GM10248 (cell line): ENCODE measurements at regions of chr15 and their contacts with region 1.

Region 1: GRCh38 chr15:76139368-76140073 is 79.7 kb downstream of the TMEM266 start:
- DNase-seq: peak; percentile 86
- CTCF ChIP-seq: peak; percentile 91

Region 2: DNA sequence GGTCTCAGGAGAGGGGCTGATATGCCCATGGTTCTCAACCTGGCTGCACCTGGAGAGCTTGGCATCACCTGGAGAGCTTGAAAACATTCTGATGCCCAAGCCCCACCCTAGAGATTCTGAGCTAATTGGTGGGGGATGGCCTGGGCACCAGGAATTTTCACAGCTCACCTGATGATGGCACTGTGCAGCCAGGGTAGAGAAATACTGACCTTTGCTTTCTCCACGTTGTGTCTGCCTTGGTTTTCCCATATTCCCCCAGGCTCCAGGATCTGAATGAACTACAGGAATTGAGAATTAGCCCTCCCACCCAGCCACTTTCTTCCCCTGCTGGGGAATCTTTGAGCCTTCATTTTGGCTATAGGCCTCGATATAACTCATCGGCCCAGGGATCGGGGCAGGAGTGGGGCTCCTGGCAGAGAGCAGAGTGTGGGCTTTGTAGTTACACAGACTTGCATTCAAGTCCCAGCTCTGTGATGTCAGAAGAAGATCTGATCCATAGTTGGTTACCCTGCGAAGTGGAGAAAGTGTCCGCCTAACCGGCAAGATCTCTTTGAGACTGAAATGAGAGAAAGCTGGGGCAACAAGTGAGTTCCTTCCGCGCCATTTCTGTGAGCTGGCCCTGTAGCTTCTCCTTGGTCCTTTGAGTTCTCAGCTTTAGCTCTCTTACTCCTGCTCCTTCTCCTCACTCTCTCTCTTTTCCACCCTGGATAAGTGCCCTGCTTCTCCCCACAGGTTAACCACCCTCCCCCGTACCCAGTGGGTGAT is 329.4 kb before region 1 on chr15:
- CTCF ChIA-PET with region 1: interaction called, 49 read pairs
- POLR2A ChIA-PET with region 1: no interaction called
- DNase-seq: peak; percentile 40
- CTCF ChIP-seq: peak; percentile 61

Region 3: GRCh38 chr15:76011611-76012010 is 127.9 kb before region 1 on chr15:
- CTCF ChIA-PET with region 1: no interaction called
- POLR2A ChIA-PET with region 1: no interaction called
- DNase-seq: no peak
- CTCF ChIP-seq: no peak

Region 4: GRCh38 chr15:76057332-76058000 is 82.1 kb before region 1 on chr15:
- CTCF ChIA-PET with region 1: interaction called, 292 read pairs
- POLR2A ChIA-PET with region 1: no interaction called
- DNase-seq: peak; percentile 47
- CTCF ChIP-seq: peak; percentile 55

Region 5: DNA sequence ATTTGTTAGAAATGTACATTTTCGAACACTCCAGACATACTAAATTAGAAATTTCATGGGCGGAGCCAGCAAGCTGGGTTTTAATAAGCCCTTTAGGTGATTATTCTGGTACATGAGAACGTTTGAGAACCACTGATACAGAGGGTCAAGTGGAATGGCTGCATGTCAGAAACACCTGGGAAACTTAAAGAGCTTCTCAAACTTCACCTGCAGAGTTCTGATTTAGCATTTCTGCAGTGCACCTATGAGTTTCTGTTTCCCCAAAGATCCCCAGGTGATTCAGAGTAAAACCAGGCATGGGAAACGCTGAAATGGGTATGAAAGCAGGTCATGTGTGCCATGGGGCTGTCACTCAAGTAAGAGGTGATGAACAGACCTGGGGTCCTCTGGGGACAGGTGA is 11.6 kb before region 1 on chr15:
- CTCF ChIA-PET with region 1: interaction called, 40 read pairs
- POLR2A ChIA-PET with region 1: no interaction called
- DNase-seq: no peak
- CTCF ChIP-seq: no peak

Region 6: DNA sequence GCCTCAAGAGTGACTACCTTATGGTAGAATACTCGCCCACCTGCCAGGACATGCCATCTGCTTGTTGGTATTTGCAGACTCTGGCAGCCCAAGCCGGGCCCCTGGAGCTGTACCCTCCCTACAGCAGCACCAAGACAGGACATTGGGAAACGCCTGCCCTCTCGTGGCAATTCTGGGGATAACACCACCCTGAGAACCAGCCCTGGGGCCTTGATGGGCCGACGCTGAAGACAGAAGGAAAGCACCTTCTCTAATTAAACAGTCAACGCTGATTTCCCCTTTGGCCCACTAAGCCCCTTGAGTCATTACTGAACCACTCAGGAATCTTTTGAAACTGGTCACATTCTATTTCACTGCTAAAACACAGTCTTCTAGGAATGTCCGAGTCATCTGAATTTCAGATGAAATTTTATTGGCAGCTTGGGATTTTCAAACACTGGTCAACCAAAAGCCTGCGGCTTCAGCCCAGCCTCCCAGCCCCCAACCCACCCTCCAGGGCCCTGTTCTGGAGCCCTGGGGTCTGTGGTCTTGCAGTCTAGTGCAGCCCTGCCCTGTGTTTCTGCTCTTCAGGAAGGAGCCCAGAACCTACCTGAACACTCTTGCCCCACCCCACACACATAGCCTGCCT is 11.6 kb after region 1 on chr15:
- CTCF ChIA-PET with region 1: interaction called, 164 read pairs
- POLR2A ChIA-PET with region 1: no interaction called
- DNase-seq: peak; percentile 86
- CTCF ChIP-seq: peak; percentile 88

Region 7: DNA sequence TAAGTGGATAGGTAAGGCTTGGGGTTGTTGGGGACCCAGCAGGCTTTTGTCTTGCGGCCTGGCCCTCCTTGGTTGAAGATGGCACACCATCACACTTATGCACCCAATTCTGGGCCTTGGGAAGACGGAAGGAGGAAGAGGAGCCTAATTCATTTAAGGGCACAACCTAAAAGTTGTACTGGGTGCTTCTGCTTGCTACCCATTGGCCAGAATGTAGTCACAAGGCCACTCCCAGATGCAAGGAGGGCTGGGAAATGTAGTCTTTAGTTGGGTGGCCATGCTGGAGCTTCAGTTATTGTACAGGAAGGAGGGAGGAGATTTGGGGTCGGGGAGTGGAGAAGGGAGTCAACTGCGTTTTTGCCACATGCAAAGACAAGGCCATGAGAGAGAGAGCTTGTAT is 29.5 kb after region 1 on chr15:
- CTCF ChIA-PET with region 1: interaction called, 16 read pairs
- POLR2A ChIA-PET with region 1: no interaction called
- DNase-seq: no peak
- CTCF ChIP-seq: no peak